Heart left ventricle (tissue), 16 donors: ENCODE measurements at regions of chr15 and their contacts with region 1.

Region 1: GRCh38 chr15:36896949-36897348 is 203.4 kb downstream of the MEIS2 start:
- DNase-seq: no peak
- ATAC-seq: peak; percentile 55 to 76 (median 66)
- H3K4me3 ChIP-seq: no peak overlapping the region
- H3K27ac ChIP-seq: peak overlapping the region in 10 of 12 donors; percentile 13 to 61 (median 43)
- H3K4me1 ChIP-seq: peaks cover 0 to 28% (median 4%) of the 10 kb centered on the region in 12 donors
- H3K27me3 ChIP-seq: no peaks in the 10 kb centered on the region
- CTCF ChIP-seq: no peak
- POLR2A ChIP-seq: no peak

Region 2: DNA sequence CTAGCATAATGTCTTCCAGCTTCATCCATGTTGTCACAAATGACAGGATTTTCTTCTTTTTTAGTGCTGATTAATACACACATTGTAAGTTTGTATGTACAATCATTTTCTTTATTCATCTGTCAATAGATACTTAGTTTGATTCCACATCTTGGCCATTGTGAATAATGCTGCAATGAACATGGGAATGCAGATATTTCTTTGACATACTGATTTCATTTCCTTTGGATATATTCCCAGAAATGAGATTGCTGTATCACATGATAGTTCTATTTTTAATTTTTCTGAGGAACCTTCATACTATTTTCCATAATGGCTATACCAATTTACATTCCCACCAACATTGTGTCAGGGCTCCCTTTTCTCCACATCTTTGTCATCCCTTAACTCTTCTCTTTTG is 85.5 kb after region 1 on chr15:
- intact Hi-C with region 1: loop called in 1 of 10 experiments (anchors 10 kb)
- DNase-seq: no peak
- ATAC-seq: no peak
- H3K4me3 ChIP-seq: no peak overlapping the region
- H3K27ac ChIP-seq: peak overlapping the region in 4 of 12 donors; percentile 27 to 43 (median 34)
- H3K4me1 ChIP-seq: peaks cover 0 to 24% (median 3%) of the 10 kb centered on the region in 12 donors
- H3K27me3 ChIP-seq: no peaks in the 10 kb centered on the region
- CTCF ChIP-seq: no peak
- POLR2A ChIP-seq: no peak

Region 3: GRCh38 chr15:37007301-37007700 is 110.4 kb after region 1 on chr15:
- intact Hi-C with region 1: loop called in 1 of 10 experiments (anchors 10 kb)
- DNase-seq: no peak
- ATAC-seq: peak in 2 of 4 donors; percentile 42 to 64
- H3K4me3 ChIP-seq: no peak overlapping the region
- H3K27ac ChIP-seq: peak overlapping the region in 8 of 12 donors; percentile 2 to 36 (median 14)
- H3K4me1 ChIP-seq: peaks cover 0 to 32% (median 6%) of the 10 kb centered on the region in 12 donors
- H3K27me3 ChIP-seq: no peaks in the 10 kb centered on the region
- CTCF ChIP-seq: no peak
- POLR2A ChIP-seq: no peak

Region 4: DNA sequence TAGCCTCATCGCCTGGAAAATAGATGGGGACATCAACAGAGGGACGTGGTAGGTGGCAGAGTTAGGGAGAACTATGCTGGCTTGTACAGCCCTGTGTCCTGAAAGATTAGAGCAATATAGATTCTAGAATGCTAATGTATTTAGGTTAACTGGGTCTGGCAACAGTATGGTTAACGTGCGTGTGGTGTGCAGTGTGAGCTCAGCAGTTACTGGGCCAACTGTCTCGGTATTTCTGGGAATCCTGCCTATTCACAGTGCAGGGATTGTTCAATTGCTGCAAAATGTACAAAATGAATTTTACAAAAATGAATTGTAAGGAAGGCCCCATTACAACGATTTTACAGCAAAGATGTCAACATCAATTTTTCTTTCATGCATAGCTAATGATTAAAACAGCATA is 182.8 kb after region 1 on chr15:
- intact Hi-C with region 1: loop called in 1 of 10 experiments (anchors 10 kb)
- DNase-seq: peak in 1 of 5 donors; percentile 25
- ATAC-seq: peak in 3 of 4 donors; percentile 41 to 70 (median 68)
- H3K4me3 ChIP-seq: no peak overlapping the region
- H3K27ac ChIP-seq: peak overlapping the region in 6 of 12 donors; percentile 11 to 60 (median 34)
- H3K4me1 ChIP-seq: peaks cover 0 to 52% (median 32%) of the 10 kb centered on the region in 12 donors
- H3K27me3 ChIP-seq: no peaks in the 10 kb centered on the region
- CTCF ChIP-seq: no peak
- POLR2A ChIP-seq: no peak